GM12878 (cell line): ENCODE measurements at regions of chr9 and their contacts with region 1.

Region 1: DNA sequence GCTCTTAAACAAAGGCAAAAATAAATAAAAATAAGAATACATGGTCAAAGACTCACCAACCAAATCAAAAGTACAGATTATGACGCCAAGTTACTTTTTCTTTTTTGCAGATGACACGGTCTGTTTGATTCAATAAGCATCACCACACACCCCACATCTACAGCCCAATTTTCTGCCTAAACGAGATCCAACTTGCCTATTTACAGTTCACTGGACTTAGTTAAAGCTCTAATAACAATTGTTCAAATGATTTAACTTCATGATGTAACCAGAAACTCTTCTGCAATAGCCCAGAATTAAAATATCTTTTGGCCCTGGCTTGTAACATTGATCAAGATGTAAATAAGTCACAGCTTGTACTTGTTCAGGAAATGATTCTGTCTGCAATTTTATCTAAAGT is 590.3 kb upstream of the C9orf72 start:
- DNase-seq: no peak
- ATAC-seq: no peak
- H3K4me3 ChIP-seq: no peak overlapping the region
- H3K27ac ChIP-seq: no peak overlapping the region
- H3K4me1 ChIP-seq: no peaks in the 10 kb centered on the region
- H3K27me3 ChIP-seq: no peaks in the 10 kb centered on the region
- CTCF ChIP-seq: no peak
- EP300 ChIP-seq: no peak
- POLR2A ChIP-seq: no peak
- RAD21 ChIP-seq: no peak

Region 2: DNA sequence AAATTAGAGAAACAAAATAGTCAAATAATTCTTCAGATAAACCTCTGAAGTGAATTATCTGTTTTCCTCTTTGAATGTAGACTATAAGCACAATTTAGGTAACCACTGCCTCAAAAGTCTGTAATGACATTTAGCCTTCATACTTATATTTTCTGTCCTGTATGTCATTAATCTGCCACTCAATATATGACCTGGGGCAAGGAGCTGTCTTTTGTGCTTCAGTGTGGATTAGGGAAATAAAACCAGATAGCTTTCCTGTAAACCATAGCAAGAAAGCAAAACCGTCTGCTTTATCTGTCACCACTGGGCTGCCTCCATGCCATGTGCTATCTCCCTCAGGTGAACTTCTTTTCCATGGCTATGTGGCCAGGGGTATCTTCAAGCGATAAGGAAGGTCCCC is 16.3 kb after region 1 on chr9:
- CTCF ChIA-PET with region 1: interaction called, 3 read pairs
- POLR2A ChIA-PET with region 1: no interaction called
- RAD21 ChIA-PET with region 1: no interaction called
- SMC1A ChIA-PET with region 1: no interaction called
- in situ Hi-C with region 1: no loop called
- intact Hi-C with region 1: loop called (anchors 2 kb)
- DNase-seq: no peak
- ATAC-seq: no peak
- H3K4me3 ChIP-seq: no peak overlapping the region
- H3K27ac ChIP-seq: no peak overlapping the region
- H3K4me1 ChIP-seq: no peaks in the 10 kb centered on the region
- H3K27me3 ChIP-seq: no peaks in the 10 kb centered on the region
- CTCF ChIP-seq: no peak
- EP300 ChIP-seq: no peak
- POLR2A ChIP-seq: no peak
- RAD21 ChIP-seq: no peak